Left cardiac atrium (tissue), 4 donors: ENCODE measurements at regions of chr16 and their contacts with region 1.

Region 1: DNA sequence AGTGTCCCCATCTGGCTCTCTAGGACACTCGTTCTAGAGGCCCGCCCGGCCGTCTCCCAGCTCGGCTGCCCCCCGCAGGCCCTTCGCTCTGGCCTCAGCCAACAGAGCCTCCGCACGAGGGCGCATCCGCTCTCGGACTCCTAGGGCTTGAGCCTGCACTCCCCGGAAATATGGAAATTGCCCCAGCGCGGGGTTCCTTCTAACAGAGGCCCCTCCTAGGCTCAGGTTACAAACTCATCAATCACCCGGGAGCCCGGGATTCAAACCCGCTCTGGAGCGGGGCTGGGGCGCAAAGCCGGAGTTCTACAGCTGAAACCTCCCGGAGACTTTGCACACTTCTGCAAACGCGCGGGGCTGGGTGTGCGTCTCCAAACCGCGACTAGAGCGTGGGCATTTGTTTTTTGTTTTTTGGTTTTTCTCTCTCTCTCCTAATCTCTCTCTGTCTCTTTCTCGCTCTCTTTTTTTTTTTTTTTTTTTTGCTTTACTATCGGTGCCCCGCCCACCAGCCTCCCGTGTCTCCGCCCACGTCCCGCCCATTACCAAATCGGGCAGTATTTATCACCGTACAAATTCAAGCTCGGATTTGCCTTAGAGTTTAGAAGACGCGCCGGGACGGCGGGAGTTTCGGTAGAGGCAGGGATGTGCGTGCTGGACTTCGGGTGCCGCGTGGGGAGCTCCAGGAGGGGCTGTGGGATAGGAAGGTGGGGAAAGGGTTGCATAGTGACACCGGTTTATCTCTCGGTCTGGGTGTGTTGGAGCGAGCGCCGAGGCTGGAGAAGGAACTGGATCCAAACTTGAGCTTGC is 2.4 kb upstream of the FOXL1 start:
- DNase-seq: peak; percentile 84
- ATAC-seq: peak; percentile 77 to 83

Region 2: DNA sequence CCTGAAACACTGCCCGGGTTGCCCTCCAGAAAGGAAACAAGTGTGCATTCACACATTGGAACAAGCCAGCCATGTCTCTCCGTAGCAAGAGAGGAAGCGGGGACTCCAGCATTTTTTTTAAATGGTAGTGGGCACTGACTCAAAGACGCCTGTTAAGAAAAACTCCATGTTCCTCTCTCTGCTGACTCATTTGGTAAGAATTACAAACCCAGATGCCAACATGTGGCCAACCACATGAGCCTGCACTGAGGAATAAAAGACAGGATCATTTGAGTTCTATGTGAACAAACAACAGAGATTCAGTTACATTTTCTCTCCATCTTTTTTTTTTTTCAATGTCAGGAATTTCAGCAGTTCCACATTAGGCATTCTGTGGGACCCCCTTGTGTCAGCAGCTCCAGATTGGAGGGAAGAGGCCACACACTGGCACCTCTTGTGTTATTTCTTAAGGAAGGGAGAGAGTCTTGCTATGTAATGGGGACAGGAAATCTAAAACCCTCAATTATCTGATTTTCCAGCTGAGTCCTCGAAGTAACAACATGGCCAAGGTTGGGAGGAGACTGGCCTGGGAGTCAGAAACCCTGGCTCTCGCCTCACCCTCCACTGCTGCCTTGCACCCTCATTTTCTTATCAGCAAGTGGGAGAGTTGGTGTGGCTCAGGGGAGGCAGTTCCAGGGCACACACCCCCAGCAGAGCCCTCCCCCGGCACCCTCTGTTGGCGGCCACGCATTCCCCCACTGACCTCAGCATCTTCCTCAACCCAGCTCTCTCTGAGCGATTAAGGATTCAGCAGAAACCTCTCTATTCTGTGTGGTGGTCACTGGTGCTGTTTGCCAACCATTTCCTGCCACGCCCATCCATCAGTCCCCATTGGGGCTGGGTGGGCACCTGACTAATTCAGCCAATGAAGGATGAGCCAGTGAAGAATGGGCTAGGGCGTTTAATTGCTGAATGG is 175.4 kb after region 1 on chr16:
- intact Hi-C with region 1: loop called in 1 of 2 experiments (anchors 10 kb)
- DNase-seq: no peak
- ATAC-seq: peak; percentile 45 to 61